ENCODE measurements at regions of chr19 and their contacts with region 1.

Region 1: GRCh38 chr19:41795031-41795461 is 1.3 kb upstream of the CEACAM3 start:
- DNase-seq: peak; percentile 77
- ATAC-seq: peak; percentile 91
- H3K4me3 Mint-ChIP-seq: no peak overlapping the region
- H3K27ac Mint-ChIP-seq: no peak overlapping the region
- H3K4me1 Mint-ChIP-seq: no peaks in the 10 kb centered on the region
- H3K27me3 Mint-ChIP-seq: peaks cover 29% of the 10 kb centered on the region

Region 2: DNA sequence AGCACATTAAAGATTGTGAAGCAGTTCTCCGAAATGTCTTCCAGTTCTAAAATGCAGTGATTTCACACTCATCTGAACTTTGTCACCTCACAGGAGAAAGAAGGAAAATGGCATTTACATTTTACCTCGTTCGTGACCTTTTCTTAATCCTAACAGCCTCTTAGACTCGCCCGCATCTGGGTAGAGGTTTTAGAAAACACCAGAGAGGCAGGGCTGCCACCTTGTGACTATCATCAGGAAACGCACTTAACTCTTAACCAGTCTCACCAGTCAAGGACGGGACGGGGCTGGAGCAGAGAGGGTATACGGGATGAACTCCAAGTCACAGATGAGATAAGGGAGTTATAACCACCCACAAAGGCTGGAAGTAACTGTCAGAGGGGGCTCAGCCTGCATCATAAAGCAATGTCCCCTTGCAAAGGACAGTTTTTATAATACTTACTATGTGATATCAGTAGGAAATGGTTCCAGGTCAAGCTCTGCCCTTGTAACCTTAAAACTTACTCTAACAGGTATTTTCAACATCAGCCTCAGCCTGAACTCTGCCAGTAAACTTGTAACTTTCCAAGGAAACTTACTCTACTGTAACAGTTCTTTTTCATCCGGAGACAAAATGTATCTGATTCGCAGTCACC is 48.3 kb before region 1 on chr19:
- CTCF ChIA-PET with region 1: interaction called, 69 read pairs
- POLR2A ChIA-PET with region 1: no interaction called
- DNase-seq: peak; percentile 70
- ATAC-seq: peak; percentile 84
- H3K4me3 Mint-ChIP-seq: no peak overlapping the region
- H3K27ac Mint-ChIP-seq: no peak overlapping the region
- H3K4me1 Mint-ChIP-seq: peaks cover 9% of the 10 kb centered on the region
- H3K27me3 Mint-ChIP-seq: peaks cover 47% of the 10 kb centered on the region

Region 3: GRCh38 chr19:41775360-41775695 is 19.7 kb before region 1 on chr19:
- CTCF ChIA-PET with region 1: interaction called, 14 read pairs
- POLR2A ChIA-PET with region 1: no interaction called
- DNase-seq: no peak
- ATAC-seq: no peak
- H3K4me3 Mint-ChIP-seq: no peak overlapping the region
- H3K27ac Mint-ChIP-seq: no peak overlapping the region
- H3K4me1 Mint-ChIP-seq: peaks cover 22% of the 10 kb centered on the region
- H3K27me3 Mint-ChIP-seq: peaks cover 67% of the 10 kb centered on the region

Region 4: DNA sequence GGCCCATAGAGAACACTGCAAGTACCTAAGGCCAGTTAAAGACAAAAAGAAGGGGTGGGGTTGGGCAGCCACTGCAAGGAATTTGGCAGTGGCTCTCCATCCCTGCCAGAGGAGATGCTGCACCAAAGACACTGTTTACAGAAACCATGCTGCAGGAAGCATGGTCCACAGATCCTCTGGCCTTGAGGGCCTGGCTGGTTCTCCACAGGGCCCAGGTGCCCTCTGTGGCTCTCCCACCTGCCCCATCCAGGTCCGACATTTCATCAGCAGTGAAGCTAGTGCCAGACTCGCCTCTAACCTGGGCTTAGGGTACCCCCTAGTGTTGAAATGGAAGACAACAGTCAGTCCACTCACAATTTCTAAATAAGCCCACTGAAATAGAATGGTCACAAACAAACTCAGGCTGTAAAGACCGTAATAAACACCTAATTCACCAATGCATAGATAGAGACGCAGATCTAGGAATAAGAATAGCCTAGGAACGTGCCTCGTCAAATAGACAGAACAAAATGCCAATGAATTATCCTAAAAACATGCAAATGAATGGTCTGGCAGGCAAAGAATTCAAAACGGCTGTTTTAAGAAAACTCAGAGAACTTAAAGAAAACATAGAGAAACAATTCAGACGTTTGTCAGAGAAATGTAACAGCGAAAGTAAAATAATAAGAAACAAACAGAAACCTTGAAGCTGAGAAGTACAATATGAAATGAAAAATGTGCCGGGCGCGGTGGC is 26.1 kb after region 1 on chr19:
- CTCF ChIA-PET with region 1: interaction called, 152 read pairs
- POLR2A ChIA-PET with region 1: no interaction called
- DNase-seq: peak; percentile 66
- ATAC-seq: peak; percentile 88
- H3K4me3 Mint-ChIP-seq: no peak overlapping the region
- H3K27ac Mint-ChIP-seq: no peak overlapping the region
- H3K4me1 Mint-ChIP-seq: no peaks in the 10 kb centered on the region
- H3K27me3 Mint-ChIP-seq: peaks cover 16% of the 10 kb centered on the region

Region 5: DNA sequence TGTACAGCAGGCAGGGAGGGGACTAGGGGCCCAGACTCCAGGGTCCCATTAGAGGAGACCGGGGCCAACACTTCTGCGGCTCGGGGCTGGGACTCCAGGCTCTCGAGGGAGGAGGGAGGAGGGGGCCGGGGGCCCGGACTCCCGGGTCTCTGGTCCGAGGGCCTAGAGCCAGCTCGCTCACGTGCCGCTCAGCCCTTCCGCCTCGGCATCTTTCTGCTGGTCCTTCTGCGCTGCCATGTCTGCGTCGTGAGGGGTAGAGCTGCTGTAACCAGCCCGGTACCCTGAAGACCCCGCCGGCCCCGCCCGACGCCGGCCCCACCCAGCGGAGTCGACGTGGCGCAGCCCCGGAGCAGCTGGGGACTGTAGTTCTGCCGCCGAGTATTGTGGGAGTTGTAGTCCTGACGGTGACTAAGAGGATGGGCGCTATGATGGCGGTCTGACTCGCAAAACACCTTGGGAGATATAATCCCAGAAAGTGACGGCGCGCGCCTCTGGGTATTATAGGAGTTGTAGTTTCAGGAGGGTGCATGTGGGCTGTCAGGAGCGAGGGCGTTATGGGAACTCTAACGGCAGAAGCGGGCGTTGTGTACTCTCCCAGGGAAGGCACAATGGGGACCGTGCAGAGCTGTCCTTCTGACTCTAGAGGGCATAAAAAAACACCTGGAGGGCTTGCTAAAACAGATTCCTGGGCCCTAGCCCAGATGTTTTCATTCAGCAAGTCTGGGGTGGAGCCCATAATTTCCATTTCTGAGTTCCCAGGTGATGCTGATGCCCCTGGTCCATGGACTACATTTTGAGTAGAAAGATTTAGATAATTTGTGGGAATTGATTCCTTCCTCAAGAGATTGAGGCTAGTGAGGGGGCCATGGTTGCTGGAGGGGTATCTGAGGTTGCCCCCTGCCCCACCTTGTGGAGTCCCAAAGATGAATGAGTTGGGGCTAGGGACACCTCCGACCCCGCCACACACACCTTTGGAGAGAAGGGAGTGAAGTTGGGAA is 164.3 kb after region 1 on chr19 and contains the start of gene RABAC1:
- CTCF ChIA-PET with region 1: interaction called, 10 read pairs
- POLR2A ChIA-PET with region 1: no interaction called
- DNase-seq: peak; percentile 93
- ATAC-seq: peak; percentile 93
- H3K4me3 Mint-ChIP-seq: peak within 1 kb of the TSS; percentile 89
- H3K27ac Mint-ChIP-seq: peak within 1 kb of the TSS; percentile 78
- H3K4me1 Mint-ChIP-seq: peaks cover 20% of the 10 kb centered on the region
- H3K27me3 Mint-ChIP-seq: no peaks in the 10 kb centered on the region
- total RNA-seq, gene RABAC1: 63.0 to 63.4 TPM